Activated CD4-positive, alpha-beta memory T cell treated with anti-CD3 and anti-CD28 coated beads for 36 hours (primary cell): ENCODE measurements at regions of chr1 and their contacts with region 1.

Region 1: DNA sequence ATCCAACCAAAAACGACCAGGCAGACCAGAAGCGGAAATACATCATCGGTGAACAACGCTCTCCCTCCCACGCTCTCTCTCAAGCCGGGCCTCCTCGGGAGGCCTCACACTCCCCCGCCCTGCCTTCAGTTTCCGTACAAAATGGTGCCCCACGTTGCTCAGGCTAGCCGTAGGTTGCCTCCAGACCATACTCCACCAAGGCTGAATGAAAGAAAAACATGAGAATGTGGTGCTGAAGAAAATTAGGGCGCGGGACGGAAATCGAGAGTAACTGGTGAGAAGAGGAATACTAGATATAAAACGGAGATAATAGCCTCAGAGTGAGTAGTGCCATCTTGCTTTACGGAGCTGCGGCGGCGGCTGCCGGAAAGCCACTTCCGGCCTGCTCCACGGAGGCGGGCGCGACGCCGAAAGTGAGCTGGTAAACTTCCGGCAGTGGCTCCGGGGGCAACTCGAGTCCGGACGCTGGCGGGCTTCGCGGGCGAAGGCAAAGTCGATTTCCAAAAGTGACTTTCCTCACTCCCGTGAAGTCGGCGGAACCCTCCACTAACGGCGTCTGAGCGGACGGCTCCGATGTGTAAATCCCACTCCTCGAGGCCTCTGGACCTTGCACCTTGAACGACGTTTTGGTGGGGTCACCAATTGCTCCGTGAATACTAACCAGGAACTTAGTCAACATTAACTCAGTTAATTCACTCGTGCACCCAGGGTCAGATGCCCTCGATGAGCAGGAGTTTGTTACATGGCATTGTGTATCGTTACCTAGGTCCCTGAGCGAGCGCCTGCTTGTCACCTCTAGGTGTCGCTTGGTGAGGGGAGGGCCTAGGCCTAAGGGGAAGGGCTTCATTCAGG is at the start of gene SH3BP5L:
- DNase-seq: peak; percentile 94
- H3K4me3 Mint-ChIP-seq: peak within 1 kb of the TSS; percentile 84
- H3K27ac Mint-ChIP-seq: peak within 1 kb of the TSS; percentile 97
- H3K4me1 Mint-ChIP-seq: peaks cover 52% of the 10 kb centered on the region
- H3K27me3 Mint-ChIP-seq: no peaks in the 10 kb centered on the region
- total RNA-seq, gene SH3BP5L: 19.7 to 19.9 TPM

Region 2: DNA sequence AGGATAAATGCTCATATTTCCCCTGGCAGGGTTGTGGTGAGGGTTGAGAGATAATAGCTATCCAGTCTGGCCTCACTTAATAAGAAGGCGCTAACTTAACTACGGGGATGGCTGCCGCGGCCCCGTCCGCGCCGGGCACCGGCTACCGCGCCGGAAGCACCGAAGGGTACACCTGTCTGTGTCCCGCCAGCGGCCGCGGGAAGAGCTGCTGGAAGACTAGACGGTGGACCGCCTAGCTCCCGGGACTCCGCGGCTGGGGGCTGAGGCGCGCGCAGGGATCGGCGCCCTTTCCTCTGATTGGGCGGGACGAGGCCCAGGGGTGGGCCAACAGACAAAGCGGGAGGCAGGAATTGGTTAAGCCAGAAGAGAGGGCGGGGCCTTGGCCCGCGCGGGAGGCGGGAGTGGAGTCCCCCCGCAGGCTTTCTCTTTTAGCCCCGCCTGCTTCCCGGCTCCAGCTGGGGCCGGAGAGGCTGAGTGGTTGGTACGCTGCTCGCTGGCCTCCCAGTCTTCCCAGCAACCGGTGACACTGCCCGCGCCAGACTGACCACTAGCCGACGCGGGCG is 11.7 kb after region 1 on chr1 and contains the start of gene ZNF672:
- CTCF ChIA-PET with region 1: interaction called, 26 read pairs
- POLR2A ChIA-PET with region 1: interaction called, 67 read pairs
- intact Hi-C with region 1: loop called (anchors 1 kb)
- DNase-seq: peak; percentile 96
- H3K4me3 Mint-ChIP-seq: no peak within 1 kb of the TSS
- H3K27ac Mint-ChIP-seq: no peak within 1 kb of the TSS
- H3K4me1 Mint-ChIP-seq: peaks cover 27% of the 10 kb centered on the region
- H3K27me3 Mint-ChIP-seq: peaks cover 2% of the 10 kb centered on the region
- total RNA-seq, gene ZNF672: 50.3 to 51.4 TPM